K562 (cell line): ENCODE measurements at regions of chr2 and their contacts with region 1.

Region 1: DNA sequence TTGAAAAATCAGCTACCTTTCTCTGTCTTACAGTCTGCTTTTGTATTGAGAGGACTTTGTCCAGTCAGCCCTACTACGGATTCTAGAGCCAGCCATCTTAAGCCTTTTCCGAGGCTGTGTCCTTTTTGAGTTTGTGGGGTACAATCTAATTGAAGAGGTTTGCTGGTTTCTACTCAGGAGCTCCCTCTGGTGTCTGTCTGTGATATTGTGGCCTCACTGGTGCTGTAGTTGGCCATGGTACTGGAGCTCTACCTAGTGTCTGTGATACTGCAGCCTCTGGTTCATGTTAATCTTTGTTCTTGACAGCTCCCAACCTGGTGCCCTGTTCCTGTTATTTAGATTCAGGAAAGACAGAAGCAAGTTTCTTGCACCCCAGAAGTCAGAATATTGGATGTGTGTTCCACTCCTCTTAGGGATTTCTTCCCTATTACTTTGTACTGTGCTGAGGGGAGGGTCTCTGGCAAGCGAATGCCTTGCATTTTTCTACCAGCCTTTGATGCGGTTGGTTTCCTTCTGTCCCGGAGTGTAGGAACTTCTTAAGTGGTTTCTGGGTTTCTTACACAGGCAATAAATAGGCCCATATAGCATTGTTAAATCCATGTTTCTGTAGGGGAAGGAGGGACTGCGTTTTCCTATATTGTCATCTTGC is 78.5 kb downstream of the ACSL3 start:
- DNase-seq: peak; percentile 22 to 74 (median 34)
- ATAC-seq: peak; percentile 93
- H3K4me3 ChIP-seq: no peak overlapping the region
- H3K27ac ChIP-seq: no peak overlapping the region
- H3K4me1 ChIP-seq: no peaks in the 10 kb centered on the region
- H3K27me3 ChIP-seq: no peaks in the 10 kb centered on the region
- CTCF ChIP-seq: peak; percentile 78 to 98 (median 93)
- EP300 ChIP-seq: no peak
- POLR2A ChIP-seq: no peak
- RAD21 ChIP-seq: peak; percentile 56 to 76

Region 2: GRCh38 chr2:222690564-222691200 is 248.7 kb before region 1 on chr2:
- CTCF ChIA-PET with region 1: interaction called, 17 read pairs
- POLR2A ChIA-PET with region 1: no interaction called
- in situ Hi-C with region 1: no loop called
- intact Hi-C with region 1: loop called (anchors 2 kb)
- DNase-seq: peak; percentile 81 to 86 (median 82)
- ATAC-seq: peak; percentile 98
- H3K4me3 ChIP-seq: no peak overlapping the region
- H3K27ac ChIP-seq: no peak overlapping the region
- H3K4me1 ChIP-seq: peaks cover 0 to 4% of the 10 kb centered on the region in 2 experiments; a peak in 1 of 5 replicates
- H3K27me3 ChIP-seq: no peaks in the 10 kb centered on the region
- CTCF ChIP-seq: peak; percentile 99 to 100 (median 100)
- EP300 ChIP-seq: no peak
- POLR2A ChIP-seq: no peak
- RAD21 ChIP-seq: peak; percentile 72 to 90

Region 3: DNA sequence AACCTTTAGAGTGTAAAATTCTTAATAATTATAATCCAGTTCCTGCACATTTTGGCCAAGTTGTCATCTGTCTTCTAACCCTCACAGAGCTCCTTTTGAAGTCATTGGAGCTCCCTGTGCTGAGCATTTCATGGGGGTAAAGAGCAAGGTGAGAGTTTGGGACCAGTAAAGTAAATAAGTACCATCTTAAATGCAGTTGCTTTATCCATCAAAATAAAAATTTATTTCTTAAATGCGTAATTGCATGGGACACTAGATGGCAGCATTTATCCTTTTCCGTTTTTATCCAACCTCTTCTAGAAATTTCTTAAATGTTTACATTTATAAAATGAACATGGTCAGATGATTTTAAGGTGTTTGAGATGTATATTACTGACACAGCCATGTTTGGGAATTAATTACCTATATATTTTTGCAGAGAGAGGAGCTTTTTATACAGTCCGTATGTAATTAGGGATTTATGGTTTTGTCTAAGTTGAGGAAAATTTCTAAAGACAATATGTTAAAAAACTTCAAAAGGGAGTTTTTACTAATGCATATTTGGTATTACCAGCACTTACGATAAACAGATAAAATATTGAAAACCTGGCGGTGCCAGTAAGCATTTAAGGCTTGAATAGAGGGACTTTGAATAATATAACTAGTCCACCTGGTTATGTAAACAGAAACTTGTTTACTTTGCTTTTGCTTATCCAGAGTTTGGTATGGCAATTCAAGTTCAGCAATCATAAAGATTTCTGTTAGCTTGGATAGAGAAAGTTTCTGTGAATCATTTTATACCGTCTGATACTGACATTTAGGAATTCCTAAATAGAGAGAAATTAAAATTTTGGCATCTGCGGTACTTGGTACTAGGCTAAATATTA is 24.0 kb before region 1 on chr2:
- CTCF ChIA-PET with region 1: no interaction called
- POLR2A ChIA-PET with region 1: no interaction called
- in situ Hi-C with region 1: no loop called
- intact Hi-C with region 1: loop called (anchors 1 kb)
- DNase-seq: no peak
- ATAC-seq: no peak
- H3K4me3 ChIP-seq: no peak overlapping the region
- H3K27ac ChIP-seq: no peak overlapping the region
- H3K4me1 ChIP-seq: peaks cover 0 to 14% of the 10 kb centered on the region in 2 experiments; a peak in 2 of 5 replicates
- H3K27me3 ChIP-seq: no peaks in the 10 kb centered on the region
- CTCF ChIP-seq: peak in 2 of 3 experiments; percentile 12 to 45; a peak in 3 of 6 replicates
- EP300 ChIP-seq: no peak
- POLR2A ChIP-seq: no peak
- RAD21 ChIP-seq: no peak; a peak in 1 of 4 replicates